Activated CD4-positive, alpha-beta memory T cell treated with anti-CD3 and anti-CD28 coated beads, Interleukin-2, amount 10 ng/mL, durations not matched to agents 7 days and 5 days (primary cell): ENCODE measurements at regions of chr3 and their contacts with region 1.

Region 1: DNA sequence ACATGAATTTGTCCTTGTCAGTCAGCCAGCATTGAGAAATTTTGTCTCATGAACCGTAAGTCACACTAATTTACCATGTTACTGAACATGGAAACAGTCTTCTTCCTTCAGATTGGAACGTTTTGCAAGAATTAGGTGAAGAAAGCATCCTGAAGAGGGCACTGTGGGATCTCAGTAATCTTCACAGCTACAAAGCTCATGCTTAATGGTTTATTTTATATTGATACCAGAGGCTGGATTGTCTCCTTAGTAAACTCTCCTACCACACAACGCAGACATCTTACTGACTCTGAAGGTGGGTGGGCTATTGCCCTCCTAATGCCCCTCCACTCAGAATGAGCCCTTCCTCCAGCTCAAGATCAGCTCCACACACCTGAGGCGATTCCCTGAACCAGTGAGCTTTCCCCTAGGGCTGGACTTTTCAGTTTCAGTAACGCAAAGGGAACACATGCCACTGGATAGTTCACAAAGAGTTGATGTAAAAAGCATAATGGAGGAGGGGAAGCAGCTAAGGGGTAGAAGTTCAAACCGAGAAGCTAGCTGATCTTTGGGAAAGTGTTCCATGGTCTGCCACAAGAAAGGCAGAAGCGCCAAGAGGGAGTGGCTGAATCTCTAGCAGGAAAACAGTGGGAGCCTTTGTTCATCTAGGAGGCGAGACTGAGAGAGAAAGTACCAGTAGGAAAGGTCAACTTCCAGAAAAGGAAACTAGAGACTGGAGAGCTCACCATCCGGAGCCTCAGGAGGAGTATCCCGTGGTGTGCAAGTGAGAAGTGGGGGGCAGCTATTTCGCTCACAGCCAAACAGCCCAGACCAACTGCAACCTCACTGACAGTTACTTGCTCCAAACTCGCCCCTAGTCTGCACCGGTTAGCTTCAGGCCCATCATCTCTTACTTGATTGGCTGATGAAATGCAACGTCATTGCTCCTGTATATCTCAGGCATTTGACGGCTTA is at the start of gene SLC9C1:
- DNase-seq: peak; percentile 48
- H3K4me3 Mint-ChIP-seq: peak within 1 kb of the TSS; percentile 51
- H3K27ac Mint-ChIP-seq: no peak within 1 kb of the TSS
- H3K4me1 Mint-ChIP-seq: peaks cover 28% of the 10 kb centered on the region
- H3K27me3 Mint-ChIP-seq: no peaks in the 10 kb centered on the region
- total RNA-seq, gene SLC9C1: not detected

Region 2: GRCh38 chr3:112136959-112137693 is 156.5 kb before region 1 on chr3:
- CTCF ChIA-PET with region 1: interaction called, 31 read pairs
- POLR2A ChIA-PET with region 1: no interaction called
- DNase-seq: peak; percentile 53
- H3K4me3 Mint-ChIP-seq: no peak overlapping the region
- H3K27ac Mint-ChIP-seq: no peak overlapping the region
- H3K4me1 Mint-ChIP-seq: peaks cover 46% of the 10 kb centered on the region
- H3K27me3 Mint-ChIP-seq: no peaks in the 10 kb centered on the region

Region 3: DNA sequence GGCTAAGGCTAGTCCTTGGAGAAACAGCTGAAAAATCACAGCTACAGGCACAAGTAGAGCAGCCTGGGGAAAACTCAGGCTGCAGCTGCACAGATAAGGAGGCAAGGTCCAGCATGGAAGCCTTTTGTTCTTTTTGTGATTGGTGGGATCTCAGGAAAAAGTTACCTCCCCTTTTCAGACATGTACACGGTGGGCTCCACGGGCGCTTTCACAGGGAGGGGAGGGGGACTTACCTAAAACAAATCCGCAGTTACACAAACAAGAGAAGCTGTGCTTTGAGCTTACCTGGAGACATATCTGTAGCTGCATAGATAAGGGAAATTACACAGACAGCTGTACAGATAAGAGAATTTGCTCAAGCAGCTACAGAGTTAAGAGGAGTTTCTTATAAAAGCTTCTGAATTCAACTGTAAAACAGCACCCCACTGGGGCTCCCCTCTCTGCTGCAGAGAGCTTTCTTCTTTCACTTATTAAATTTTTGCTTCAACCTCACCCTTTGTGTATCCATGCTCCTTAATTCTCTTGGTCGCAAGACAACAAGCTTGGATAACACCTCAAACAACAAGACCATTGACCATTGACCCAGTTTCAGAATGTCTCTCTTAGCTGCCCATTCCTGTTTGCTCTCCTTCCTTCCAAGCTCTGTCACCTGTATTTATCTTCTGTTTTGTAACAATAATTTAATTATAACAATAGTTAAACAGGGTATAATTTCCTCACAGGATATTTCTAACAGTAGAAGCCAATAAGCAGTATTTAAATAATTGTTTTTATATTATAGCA is 28.4 kb after region 1 on chr3:
- CTCF ChIA-PET with region 1: interaction called, 22 read pairs
- POLR2A ChIA-PET with region 1: interaction called, 3 read pairs
- DNase-seq: no peak
- H3K4me3 Mint-ChIP-seq: no peak overlapping the region
- H3K27ac Mint-ChIP-seq: no peak overlapping the region
- H3K4me1 Mint-ChIP-seq: no peaks in the 10 kb centered on the region
- H3K27me3 Mint-ChIP-seq: peaks cover 17% of the 10 kb centered on the region

Region 4: GRCh38 chr3:112489674-112490479 is 196.2 kb after region 1 on chr3:
- CTCF ChIA-PET with region 1: no interaction called
- POLR2A ChIA-PET with region 1: no interaction called
- DNase-seq: no peak
- H3K4me3 Mint-ChIP-seq: peak overlapping the region; percentile 39
- H3K27ac Mint-ChIP-seq: peak overlapping the region; percentile 42
- H3K4me1 Mint-ChIP-seq: peaks cover 66% of the 10 kb centered on the region
- H3K27me3 Mint-ChIP-seq: no peaks in the 10 kb centered on the region

Region 5: GRCh38 chr3:112519424-112520001 is 225.9 kb after region 1 on chr3:
- CTCF ChIA-PET with region 1: interaction called, 21 read pairs
- POLR2A ChIA-PET with region 1: no interaction called
- DNase-seq: peak; percentile 33
- H3K4me3 Mint-ChIP-seq: no peak overlapping the region
- H3K27ac Mint-ChIP-seq: no peak overlapping the region
- H3K4me1 Mint-ChIP-seq: peaks cover 31% of the 10 kb centered on the region
- H3K27me3 Mint-ChIP-seq: no peaks in the 10 kb centered on the region